CD14-positive monocyte (primary cell): ENCODE measurements at regions of chr20 and their contacts with region 1.

Region 1: GRCh38 chr20:44109951-44110361 is 77.0 kb downstream of the JPH2 start:
- DNase-seq: no peak
- H3K4me3 ChIP-seq: no peak overlapping the region
- H3K4me3 Mint-ChIP-seq: no peak overlapping the region
- H3K27ac ChIP-seq: no peak overlapping the region
- H3K27ac Mint-ChIP-seq: no peak overlapping the region
- H3K4me1 ChIP-seq: no peaks in the 10 kb centered on the region
- H3K4me1 Mint-ChIP-seq: no peaks in the 10 kb centered on the region
- H3K27me3 ChIP-seq: peaks cover 3 to 7% of the 10 kb centered on the region in 2 donors
- H3K27me3 Mint-ChIP-seq: peaks cover 10 to 32% (median 27%) of the 10 kb centered on the region in 3 donors
- CTCF ChIP-seq: no peak

Region 2: DNA sequence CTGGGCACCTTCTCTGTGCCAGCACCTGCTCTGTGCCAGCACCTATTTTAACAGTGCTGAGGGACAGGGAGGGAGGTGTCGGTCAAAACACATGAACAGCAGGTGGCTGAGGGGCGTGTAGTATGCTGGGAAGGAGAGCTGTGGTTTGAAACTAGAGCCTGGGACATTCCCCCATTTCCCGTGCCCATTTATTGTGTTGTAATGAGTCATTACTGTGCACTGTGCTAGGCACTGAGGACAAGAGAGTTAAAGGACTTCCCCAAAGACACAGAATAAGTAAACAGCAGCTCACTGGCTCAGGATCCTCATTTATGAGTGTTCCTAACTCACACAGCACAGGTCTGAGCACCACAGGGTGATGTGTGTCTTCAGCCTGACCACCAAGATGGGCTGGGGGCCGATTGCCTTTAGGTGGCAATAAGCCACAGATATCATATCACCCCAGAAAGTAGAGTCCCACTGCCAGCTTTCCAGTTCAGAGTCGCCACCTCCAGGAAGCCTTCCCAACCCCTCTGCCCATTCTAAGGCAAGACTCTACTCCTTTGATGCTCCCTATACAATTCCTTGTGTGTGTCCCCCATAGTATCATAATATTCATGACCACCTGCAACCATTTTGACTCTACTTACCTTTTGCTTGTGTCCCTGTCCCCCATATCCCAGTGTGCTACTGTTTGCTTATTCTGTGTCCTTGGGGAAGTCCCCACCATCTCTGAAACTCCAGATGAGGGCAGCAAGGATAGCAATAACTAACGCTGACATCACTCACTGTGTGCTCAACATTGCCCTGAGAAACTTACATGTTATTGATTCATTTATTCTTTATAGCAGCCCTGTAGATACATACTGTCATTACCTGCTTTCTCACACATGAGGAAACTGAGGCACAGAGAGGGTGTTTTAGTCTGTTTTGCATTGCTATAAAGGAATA is 108.0 kb before region 1 on chr20:
- intact Hi-C with region 1: no loop called
- DNase-seq: peak in 1 of 3 donors; percentile 20
- H3K4me3 ChIP-seq: no peak overlapping the region
- H3K4me3 Mint-ChIP-seq: no peak overlapping the region
- H3K27ac ChIP-seq: no peak overlapping the region
- H3K27ac Mint-ChIP-seq: no peak overlapping the region
- H3K4me1 ChIP-seq: no peaks in the 10 kb centered on the region
- H3K4me1 Mint-ChIP-seq: no peaks in the 10 kb centered on the region
- H3K27me3 ChIP-seq: peaks cover 6 to 12% of the 10 kb centered on the region in 2 donors
- H3K27me3 Mint-ChIP-seq: peaks cover 17 to 34% (median 17%) of the 10 kb centered on the region in 3 donors
- CTCF ChIP-seq: no peak

Region 3: GRCh38 chr20:44187051-44187762 is 77.3 kb after region 1 on chr20 and contains the start of gene JPH2:
- intact Hi-C with region 1: loop called in 1 of 2 experiments (anchors 10 kb)
- DNase-seq: no peak
- H3K4me3 ChIP-seq: no peak within 1 kb of the TSS
- H3K4me3 Mint-ChIP-seq: peak within 1 kb of the TSS in 1 of 2 donors; percentile 75
- H3K27ac ChIP-seq: no peak within 1 kb of the TSS
- H3K27ac Mint-ChIP-seq: no peak within 1 kb of the TSS
- H3K4me1 ChIP-seq: peaks cover 4 to 11% of the 10 kb centered on the region in 2 donors
- H3K4me1 Mint-ChIP-seq: peaks cover 20% of the 10 kb centered on the region
- H3K27me3 ChIP-seq: peaks cover 19 to 38% of the 10 kb centered on the region in 2 donors
- H3K27me3 Mint-ChIP-seq: peaks cover 34 to 50% (median 39%) of the 10 kb centered on the region in 3 donors
- CTCF ChIP-seq: no peak
- polyA plus RNA-seq, gene JPH2: not detected